GM10248 (cell line): ENCODE measurements at regions of chr5 and their contacts with region 1.

Region 1: DNA sequence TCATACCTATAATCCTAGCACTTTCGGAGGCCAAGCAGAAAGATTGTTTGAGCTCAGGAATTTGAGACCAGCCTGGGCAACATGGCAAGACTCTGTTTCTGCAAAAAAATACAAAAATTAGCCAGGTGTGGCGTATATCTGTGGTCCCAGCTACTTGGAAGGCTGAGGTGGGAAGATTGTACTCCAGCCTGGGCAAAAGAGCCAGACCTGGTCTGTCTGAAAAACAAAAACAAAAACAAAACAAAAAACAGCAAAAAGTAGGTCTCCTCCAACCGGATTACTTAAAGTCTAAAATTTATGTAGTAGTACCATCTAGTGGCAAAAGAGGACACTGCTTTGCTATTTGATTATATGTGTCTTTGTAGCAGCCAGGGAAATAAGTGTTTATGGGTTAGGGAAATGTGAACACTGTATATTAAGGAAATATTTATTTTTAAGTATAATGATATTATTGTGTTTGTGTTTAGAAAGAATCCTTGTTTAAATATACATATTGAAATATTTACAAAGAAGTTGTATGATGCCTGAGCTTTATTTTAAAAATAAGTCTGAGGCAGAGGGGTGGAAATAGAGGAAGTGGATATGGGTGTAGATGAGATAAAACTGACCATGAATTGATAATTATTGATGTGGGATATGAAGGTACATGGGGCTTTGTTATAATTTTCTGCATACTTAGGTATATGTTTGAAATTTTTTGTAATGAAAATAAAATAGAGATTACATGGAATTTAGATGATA is 20.0 kb downstream of the APC start:
- DNase-seq: peak; percentile 40
- CTCF ChIP-seq: peak; percentile 72

Region 2: GRCh38 chr5:112529525-112529924 is 228.1 kb before region 1 on chr5:
- CTCF ChIA-PET with region 1: interaction called, 12 read pairs
- POLR2A ChIA-PET with region 1: no interaction called
- DNase-seq: no peak
- CTCF ChIP-seq: peak; percentile 37

Region 3: GRCh38 chr5:112551419-112552032 is 206.1 kb before region 1 on chr5:
- CTCF ChIA-PET with region 1: interaction called, 131 read pairs
- POLR2A ChIA-PET with region 1: no interaction called
- DNase-seq: peak; percentile 58
- CTCF ChIP-seq: peak; percentile 56

Region 4: GRCh38 chr5:112691758-112692157 is 65.9 kb before region 1 on chr5:
- CTCF ChIA-PET with region 1: interaction called, 32 read pairs
- POLR2A ChIA-PET with region 1: no interaction called
- DNase-seq: peak; percentile 25
- CTCF ChIP-seq: no peak

Region 5: GRCh38 chr5:112707187-112708102 is 50.2 kb before region 1 on chr5:
- CTCF ChIA-PET with region 1: interaction called, 12 read pairs
- POLR2A ChIA-PET with region 1: no interaction called
- DNase-seq: peak; percentile 98
- CTCF ChIP-seq: no peak

Region 6: GRCh38 chr5:112737463-112738190 is 20.0 kb before region 1 on chr5 and contains the start of gene APC:
- CTCF ChIA-PET with region 1: interaction called, 13 read pairs
- POLR2A ChIA-PET with region 1: no interaction called
- DNase-seq: peak; percentile 89
- CTCF ChIP-seq: no peak

Region 7: DNA sequence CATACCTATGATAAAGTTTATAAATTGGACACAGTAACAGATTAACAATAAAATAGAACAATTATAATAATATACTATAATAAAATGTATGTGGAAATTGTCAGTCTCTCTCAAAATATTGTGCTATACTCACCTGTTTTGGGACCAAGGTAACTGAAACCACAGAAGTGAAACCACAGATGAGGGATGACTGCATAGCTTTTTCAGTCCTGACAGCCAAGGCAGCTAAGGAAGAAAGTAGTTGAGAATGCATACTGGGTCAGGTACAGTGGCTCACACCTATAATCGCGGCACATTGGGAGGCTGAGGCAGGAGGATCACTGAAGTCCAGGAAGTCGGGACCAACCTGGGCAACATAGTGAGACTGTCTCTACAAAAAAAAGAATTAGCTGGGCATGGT is 112.3 kb after region 1 on chr5:
- CTCF ChIA-PET with region 1: no interaction called
- POLR2A ChIA-PET with region 1: no interaction called
- DNase-seq: peak; percentile 23
- CTCF ChIP-seq: no peak